ENCODE measurements at regions of chr21 and their contacts with region 1.

Region 1: GRCh38 chr21:45140346-45140940 is 66.1 kb downstream of the ADARB1 start:
- DNase-seq: peak; percentile 32 to 80 (median 62)
- ATAC-seq: peak; percentile 93
- H3K4me3 ChIP-seq: no peak overlapping the region
- H3K4me3 Mint-ChIP-seq: no peak overlapping the region
- H3K27ac ChIP-seq: no peak overlapping the region
- H3K27ac Mint-ChIP-seq: no peak overlapping the region
- H3K4me1 ChIP-seq: no peaks in the 10 kb centered on the region
- H3K4me1 Mint-ChIP-seq: peaks cover 6% of the 10 kb centered on the region
- H3K27me3 ChIP-seq: no peaks in the 10 kb centered on the region
- H3K27me3 Mint-ChIP-seq: no peaks in the 10 kb centered on the region
- CTCF ChIP-seq: peak; percentile 48

Region 2: DNA sequence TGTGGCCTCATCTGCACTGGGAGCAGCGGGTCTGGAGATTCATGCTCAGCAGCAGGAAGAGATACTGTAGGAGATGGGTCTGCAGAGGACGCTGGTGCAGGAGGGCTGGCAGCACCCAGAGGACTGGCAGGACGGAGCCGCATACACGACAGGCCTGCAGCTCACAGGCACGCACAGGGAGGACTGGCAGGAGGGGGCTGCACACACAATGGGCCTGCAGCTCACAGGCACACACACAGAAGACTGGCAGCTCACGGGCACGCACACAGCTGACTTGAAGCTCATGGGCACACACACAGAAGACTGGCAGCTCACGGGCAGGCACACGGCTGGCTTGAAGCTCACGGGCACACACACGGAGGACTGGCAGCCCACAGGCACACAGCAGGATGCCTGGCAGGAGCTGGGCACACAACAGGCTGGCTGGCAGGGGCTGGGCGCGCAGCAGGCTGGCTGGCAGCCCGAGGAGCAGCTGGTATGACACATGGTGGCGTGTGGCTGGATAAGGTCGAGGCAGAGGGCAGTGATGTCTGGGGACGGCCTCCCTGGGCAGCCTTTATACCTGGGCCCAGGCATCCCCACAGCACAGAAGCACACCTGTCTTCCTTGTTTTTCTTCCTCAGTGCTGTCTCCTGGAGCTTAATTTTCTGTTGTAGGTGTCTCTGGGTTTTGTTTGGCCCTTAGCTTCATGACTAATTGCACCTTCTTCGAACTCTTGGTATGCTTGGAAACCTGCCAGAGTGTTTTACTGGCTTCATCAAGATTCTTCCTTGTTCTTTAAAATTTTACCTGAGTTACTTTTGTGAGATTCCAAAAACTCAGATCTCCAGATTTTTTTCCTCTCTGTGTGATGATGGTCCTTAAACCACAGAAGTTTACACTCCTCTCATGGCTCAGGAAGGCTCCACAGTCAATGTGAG is 473.8 kb before region 1 on chr21 and contains the start of gene KRTAP12-2:
- CTCF ChIA-PET with region 1: no interaction called
- POLR2A ChIA-PET with region 1: no interaction called
- intact Hi-C with region 1: no loop called
- DNase-seq: no peak
- ATAC-seq: no peak
- H3K4me3 ChIP-seq: no peak within 1 kb of the TSS
- H3K4me3 Mint-ChIP-seq: no peak within 1 kb of the TSS
- H3K27ac ChIP-seq: no peak within 1 kb of the TSS
- H3K27ac Mint-ChIP-seq: no peak within 1 kb of the TSS
- H3K4me1 ChIP-seq: no peaks in the 10 kb centered on the region
- H3K4me1 Mint-ChIP-seq: peaks cover 2% of the 10 kb centered on the region
- H3K27me3 ChIP-seq: no peaks in the 10 kb centered on the region
- H3K27me3 Mint-ChIP-seq: no peaks in the 10 kb centered on the region
- CTCF ChIP-seq: no peak
- total RNA-seq, gene KRTAP12-2: not detected

Region 3: GRCh38 chr21:44927587-44928461 is 212.6 kb before region 1 on chr21:
- CTCF ChIA-PET with region 1: interaction called, 13 read pairs
- POLR2A ChIA-PET with region 1: no interaction called
- intact Hi-C with region 1: no loop called
- DNase-seq: peak; percentile 59 to 96 (median 90)
- ATAC-seq: peak; percentile 78
- H3K4me3 ChIP-seq: peak overlapping the region; percentile 68 to 92
- H3K4me3 Mint-ChIP-seq: peak overlapping the region; percentile 91
- H3K27ac ChIP-seq: peak overlapping the region; percentile 75 to 79
- H3K27ac Mint-ChIP-seq: peak overlapping the region; percentile 96
- H3K4me1 ChIP-seq: peaks cover 82% of the 10 kb centered on the region
- H3K4me1 Mint-ChIP-seq: peaks cover 76% of the 10 kb centered on the region
- H3K27me3 ChIP-seq: no peaks in the 10 kb centered on the region
- H3K27me3 Mint-ChIP-seq: no peaks in the 10 kb centered on the region
- CTCF ChIP-seq: no peak

Region 4: GRCh38 chr21:44949779-44950198 is 190.7 kb before region 1 on chr21:
- CTCF ChIA-PET with region 1: interaction called, 239 read pairs
- POLR2A ChIA-PET with region 1: no interaction called
- intact Hi-C with region 1: loop called in 1 of 2 experiments (anchors 1 kb)
- DNase-seq: peak; percentile 64 to 92 (median 84)
- ATAC-seq: peak; percentile 85
- H3K4me3 ChIP-seq: no peak overlapping the region
- H3K4me3 Mint-ChIP-seq: no peak overlapping the region
- H3K27ac ChIP-seq: no peak overlapping the region
- H3K27ac Mint-ChIP-seq: no peak overlapping the region
- H3K4me1 ChIP-seq: peaks cover 8% of the 10 kb centered on the region
- H3K4me1 Mint-ChIP-seq: peaks cover 17% of the 10 kb centered on the region
- H3K27me3 ChIP-seq: no peaks in the 10 kb centered on the region
- H3K27me3 Mint-ChIP-seq: no peaks in the 10 kb centered on the region
- CTCF ChIP-seq: peak; percentile 80

Region 5: DNA sequence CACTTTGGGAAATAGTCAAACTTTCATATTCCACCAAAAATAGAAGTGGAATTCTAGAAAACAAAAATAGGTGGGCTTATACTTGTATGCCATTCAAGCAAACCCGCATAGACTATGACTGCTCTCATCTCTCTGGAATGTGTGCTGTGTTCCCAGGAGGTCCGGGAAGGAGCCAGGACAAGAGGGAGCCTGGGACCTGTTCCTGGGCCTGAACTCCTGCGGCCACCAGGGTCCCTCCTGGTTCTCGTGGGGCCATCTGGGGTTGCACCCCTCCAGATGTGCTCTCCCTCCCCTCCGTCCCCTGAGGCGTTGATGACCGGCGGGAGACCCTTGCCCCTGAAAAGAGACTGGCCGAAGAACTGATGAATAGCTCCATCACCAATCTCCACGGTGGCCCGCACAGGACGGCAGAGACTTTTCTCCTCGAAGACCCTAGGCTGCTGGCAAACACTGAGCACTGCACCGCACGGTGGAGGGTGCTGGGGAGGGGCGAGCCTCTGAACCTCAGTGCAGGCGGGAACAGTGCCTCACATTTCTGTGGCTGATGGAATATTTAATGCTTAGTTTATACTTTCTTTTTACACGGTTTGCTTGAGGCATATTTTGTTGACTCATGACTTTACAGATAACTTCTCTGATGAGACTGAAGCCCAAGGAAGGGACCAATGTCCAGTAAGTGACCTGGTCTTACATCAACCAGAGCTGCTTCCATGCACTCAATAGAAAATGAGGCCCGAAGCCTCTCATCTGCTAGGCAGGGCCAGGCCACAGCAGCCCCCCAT is 75.6 kb before region 1 on chr21:
- CTCF ChIA-PET with region 1: interaction called, 10 read pairs
- POLR2A ChIA-PET with region 1: no interaction called
- intact Hi-C with region 1: no loop called
- DNase-seq: no peak
- ATAC-seq: no peak
- H3K4me3 ChIP-seq: no peak overlapping the region
- H3K4me3 Mint-ChIP-seq: no peak overlapping the region
- H3K27ac ChIP-seq: no peak overlapping the region
- H3K27ac Mint-ChIP-seq: no peak overlapping the region
- H3K4me1 ChIP-seq: no peaks in the 10 kb centered on the region
- H3K4me1 Mint-ChIP-seq: no peaks in the 10 kb centered on the region
- H3K27me3 ChIP-seq: no peaks in the 10 kb centered on the region
- H3K27me3 Mint-ChIP-seq: peaks cover under 1% of the 10 kb centered on the region
- CTCF ChIP-seq: no peak

Region 6: GRCh38 chr21:45098867-45099266 is 41.6 kb before region 1 on chr21:
- CTCF ChIA-PET with region 1: interaction called, 10 read pairs
- POLR2A ChIA-PET with region 1: no interaction called
- intact Hi-C with region 1: no loop called
- DNase-seq: no peak
- ATAC-seq: no peak
- H3K4me3 ChIP-seq: no peak overlapping the region
- H3K4me3 Mint-ChIP-seq: no peak overlapping the region
- H3K27ac ChIP-seq: no peak overlapping the region
- H3K27ac Mint-ChIP-seq: no peak overlapping the region
- H3K4me1 ChIP-seq: peaks cover 1% of the 10 kb centered on the region
- H3K4me1 Mint-ChIP-seq: peaks cover 52% of the 10 kb centered on the region
- H3K27me3 ChIP-seq: no peaks in the 10 kb centered on the region
- H3K27me3 Mint-ChIP-seq: no peaks in the 10 kb centered on the region
- CTCF ChIP-seq: no peak

Region 7: GRCh38 chr21:45120975-45121374 is 19.5 kb before region 1 on chr21:
- CTCF ChIA-PET with region 1: interaction called, 131 read pairs
- POLR2A ChIA-PET with region 1: no interaction called
- intact Hi-C with region 1: no loop called
- DNase-seq: no peak
- ATAC-seq: no peak
- H3K4me3 ChIP-seq: no peak overlapping the region
- H3K4me3 Mint-ChIP-seq: no peak overlapping the region
- H3K27ac ChIP-seq: no peak overlapping the region
- H3K27ac Mint-ChIP-seq: no peak overlapping the region
- H3K4me1 ChIP-seq: no peaks in the 10 kb centered on the region
- H3K4me1 Mint-ChIP-seq: peaks cover 12% of the 10 kb centered on the region
- H3K27me3 ChIP-seq: no peaks in the 10 kb centered on the region
- H3K27me3 Mint-ChIP-seq: no peaks in the 10 kb centered on the region
- CTCF ChIP-seq: no peak

Region 8: GRCh38 chr21:45152265-45152746 is 11.9 kb after region 1 on chr21:
- CTCF ChIA-PET with region 1: interaction called, 93 read pairs
- POLR2A ChIA-PET with region 1: no interaction called
- intact Hi-C with region 1: no loop called
- DNase-seq: peak; percentile 47 to 88 (median 73)
- ATAC-seq: peak; percentile 95
- H3K4me3 ChIP-seq: no peak overlapping the region
- H3K4me3 Mint-ChIP-seq: peak overlapping the region; percentile 70
- H3K27ac ChIP-seq: peak overlapping the region; percentile 11 to 21
- H3K27ac Mint-ChIP-seq: peak overlapping the region; percentile 79
- H3K4me1 ChIP-seq: peaks cover 39% of the 10 kb centered on the region
- H3K4me1 Mint-ChIP-seq: peaks cover 35% of the 10 kb centered on the region
- H3K27me3 ChIP-seq: no peaks in the 10 kb centered on the region
- H3K27me3 Mint-ChIP-seq: no peaks in the 10 kb centered on the region
- CTCF ChIP-seq: peak; percentile 54

Region 9: DNA sequence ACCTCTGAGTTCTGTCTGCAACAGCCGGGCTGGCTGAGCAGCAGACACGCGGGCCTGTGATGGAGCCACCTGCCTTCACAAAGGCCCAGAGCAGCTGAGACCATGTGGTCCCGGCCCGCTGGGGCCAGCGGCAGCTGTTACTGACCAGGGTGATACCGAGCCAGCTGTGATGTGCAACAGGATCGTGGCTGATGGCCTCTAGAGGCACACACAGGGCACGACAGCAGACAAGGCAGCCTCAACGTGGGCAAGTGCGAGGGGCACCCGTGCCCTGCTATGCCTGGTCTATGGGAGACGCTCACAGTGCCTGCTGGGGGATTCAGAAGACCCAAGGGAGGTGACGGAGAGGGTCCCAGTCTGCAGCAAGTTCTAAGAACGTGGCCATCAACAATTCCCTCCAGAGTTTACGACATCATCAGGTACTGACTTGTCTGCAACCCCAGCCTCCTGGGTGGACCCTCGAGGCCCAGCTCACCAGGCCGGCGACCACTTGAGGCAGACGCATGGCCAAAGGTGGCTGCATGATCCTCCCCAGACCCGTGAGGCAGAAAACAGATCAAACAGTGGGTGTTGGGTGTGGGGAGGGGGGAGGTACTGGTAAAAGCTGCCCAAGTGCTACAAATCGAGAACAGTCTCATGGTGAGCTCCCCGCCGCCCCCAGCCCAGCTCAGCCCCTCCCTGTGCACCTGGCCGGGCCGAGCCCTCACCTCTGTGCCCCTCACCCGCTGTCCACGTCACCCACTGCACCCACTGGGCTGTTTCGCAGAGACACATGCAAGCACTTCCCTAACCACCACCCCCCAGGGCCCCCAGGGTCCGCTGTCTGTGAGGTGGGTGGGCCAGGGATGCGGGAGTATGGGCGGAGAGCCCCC is 141.2 kb after region 1 on chr21:
- CTCF ChIA-PET with region 1: no interaction called
- POLR2A ChIA-PET with region 1: no interaction called
- intact Hi-C with region 1: no loop called
- DNase-seq: peak in 3 of 9 experiments; percentile 3 to 41 (median 8)
- ATAC-seq: no peak
- H3K4me3 ChIP-seq: no peak overlapping the region
- H3K4me3 Mint-ChIP-seq: no peak overlapping the region
- H3K27ac ChIP-seq: no peak overlapping the region
- H3K27ac Mint-ChIP-seq: no peak overlapping the region
- H3K4me1 ChIP-seq: peaks cover 3% of the 10 kb centered on the region
- H3K4me1 Mint-ChIP-seq: peaks cover 10% of the 10 kb centered on the region
- H3K27me3 ChIP-seq: no peaks in the 10 kb centered on the region
- H3K27me3 Mint-ChIP-seq: no peaks in the 10 kb centered on the region
- CTCF ChIP-seq: no peak